Panc1 (cell line): ENCODE measurements at regions of chr3 and their contacts with region 1.

Region 1: GRCh38 chr3:87167628-87168456 is 59.3 kb upstream of the CHMP2B start:
- DNase-seq: peak; percentile 36
- ATAC-seq: peak; percentile 66; the same call in 1 of the 2 replicates
- H3K4me3 ChIP-seq: peak overlapping the region; percentile 29; a peak in 3 of 4 replicates
- H3K27ac ChIP-seq: no peak overlapping the region
- H3K4me1 ChIP-seq: no peaks in the 10 kb centered on the region
- H3K27me3 ChIP-seq: no peaks in the 10 kb centered on the region
- CTCF ChIP-seq: peak; percentile 60; the same call in 1 of the 2 replicates

Region 2: GRCh38 chr3:86774082-86774691 is 393.7 kb before region 1 on chr3:
- CTCF ChIA-PET with region 1: interaction called, 3 read pairs
- POLR2A ChIA-PET with region 1: no interaction called
- in situ Hi-C with region 1: no loop called
- intact Hi-C with region 1: loop called (anchors 2 kb)
- DNase-seq: no peak
- ATAC-seq: no peak
- H3K4me3 ChIP-seq: no peak overlapping the region
- H3K27ac ChIP-seq: no peak overlapping the region
- H3K4me1 ChIP-seq: no peaks in the 10 kb centered on the region
- H3K27me3 ChIP-seq: no peaks in the 10 kb centered on the region
- CTCF ChIP-seq: peak; percentile 18; the same call in 1 of the 2 replicates